ENCODE measurements at regions of chr4 and their contacts with region 1.

Region 1: GRCh38 chr4:121096629-121097028 is 24.3 kb upstream of the NDNF start:
- DNase-seq: no peak
- ATAC-seq: no peak
- H3K4me3 ChIP-seq: no peak overlapping the region
- H3K27ac ChIP-seq: no peak overlapping the region
- H3K4me1 ChIP-seq: no peaks in the 10 kb centered on the region
- H3K27me3 ChIP-seq: no peaks in the 10 kb centered on the region
- CTCF ChIP-seq: peak; percentile 45 to 83 (median 67)
- POLR2A ChIP-seq: no peak

Region 2: GRCh38 chr4:120071192-120071795 is 1025.3 kb before region 1 on chr4:
- intact Hi-C with region 1: loop called in 7 of 10 experiments (anchors 5 to 10 kb)
- DNase-seq: peak in 1 of 5 donors; percentile 37
- ATAC-seq: no peak
- H3K4me3 ChIP-seq: no peak overlapping the region
- H3K27ac ChIP-seq: no peak overlapping the region
- H3K4me1 ChIP-seq: peaks cover 0 to 28% (median 9%) of the 10 kb centered on the region in 12 donors
- H3K27me3 ChIP-seq: no peaks in the 10 kb centered on the region
- CTCF ChIP-seq: peak; percentile 50 to 78 (median 62)
- POLR2A ChIP-seq: no peak

Region 3: GRCh38 chr4:120078216-120078615 is 1018.4 kb before region 1 on chr4:
- intact Hi-C with region 1: loop called in 8 of 10 experiments (anchors 5 to 10 kb)
- DNase-seq: no peak
- ATAC-seq: no peak
- H3K4me3 ChIP-seq: no peak overlapping the region
- H3K27ac ChIP-seq: no peak overlapping the region
- H3K4me1 ChIP-seq: peaks cover 0 to 3% (median 0%) of the 10 kb centered on the region in 12 donors
- H3K27me3 ChIP-seq: no peaks in the 10 kb centered on the region
- CTCF ChIP-seq: no peak
- POLR2A ChIP-seq: no peak

Region 4: GRCh38 chr4:120971884-120972283 is 124.7 kb before region 1 on chr4:
- intact Hi-C with region 1: no loop called
- DNase-seq: no peak
- ATAC-seq: no peak
- H3K4me3 ChIP-seq: no peak overlapping the region
- H3K27ac ChIP-seq: no peak overlapping the region
- H3K4me1 ChIP-seq: no peaks in the 10 kb centered on the region
- H3K27me3 ChIP-seq: no peaks in the 10 kb centered on the region
- CTCF ChIP-seq: no peak
- POLR2A ChIP-seq: no peak

Region 5: DNA sequence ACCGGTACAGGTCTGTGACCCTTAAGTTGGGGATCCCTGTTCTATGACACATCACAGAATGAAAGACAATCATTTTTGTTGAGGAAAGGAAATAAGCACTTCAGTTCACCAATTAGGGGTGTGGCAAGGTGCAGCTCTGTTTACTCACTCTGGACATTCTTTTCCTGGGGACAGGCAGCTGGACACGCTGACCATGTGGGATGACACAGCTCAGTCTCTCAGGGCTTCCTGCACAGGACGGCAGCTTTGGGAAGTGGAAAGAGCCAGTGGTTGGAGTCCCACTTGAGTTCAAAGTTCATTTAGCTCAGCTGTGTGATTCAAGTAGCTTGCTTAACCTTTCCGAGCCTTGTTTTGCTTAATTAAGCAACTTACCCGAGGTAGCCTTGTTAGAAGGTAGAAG is 80.0 kb before region 1 on chr4:
- intact Hi-C with region 1: loop called in 4 of 10 experiments (anchors 5 to 10 kb)
- DNase-seq: no peak
- ATAC-seq: no peak
- H3K4me3 ChIP-seq: no peak overlapping the region
- H3K27ac ChIP-seq: no peak overlapping the region
- H3K4me1 ChIP-seq: peaks cover 0 to 7% (median 0%) of the 10 kb centered on the region in 12 donors
- H3K27me3 ChIP-seq: no peaks in the 10 kb centered on the region
- CTCF ChIP-seq: no peak
- POLR2A ChIP-seq: no peak

Region 6: DNA sequence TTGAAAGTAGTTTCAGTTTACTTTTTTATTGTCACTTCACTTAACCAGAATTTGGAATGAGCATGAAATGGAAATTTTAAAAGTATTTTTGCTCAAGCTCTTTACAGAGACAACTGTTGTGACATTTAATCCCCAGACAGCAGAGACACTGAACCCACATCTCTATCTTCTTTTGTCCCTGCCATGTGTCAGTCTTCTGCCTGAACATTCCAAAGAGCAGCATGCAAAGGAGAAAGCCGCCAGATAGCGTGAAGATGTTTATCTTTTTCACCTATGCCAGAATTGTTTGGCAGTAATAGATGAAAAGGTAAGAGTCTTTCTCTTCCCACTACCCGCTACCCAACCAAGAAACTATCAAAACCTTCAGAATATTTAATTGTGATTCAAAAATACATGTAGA is 71.1 kb before region 1 on chr4:
- intact Hi-C with region 1: loop called in 5 of 10 experiments (anchors 2 to 10 kb)
- DNase-seq: no peak
- ATAC-seq: no peak
- H3K4me3 ChIP-seq: no peak overlapping the region
- H3K27ac ChIP-seq: no peak overlapping the region
- H3K4me1 ChIP-seq: peaks cover 0 to 4% (median 0%) of the 10 kb centered on the region in 12 donors
- H3K27me3 ChIP-seq: no peaks in the 10 kb centered on the region
- CTCF ChIP-seq: no peak
- POLR2A ChIP-seq: no peak